HCT116 (cell line): ENCODE measurements at regions of chr13 and their contacts with region 1.

Region 1: DNA sequence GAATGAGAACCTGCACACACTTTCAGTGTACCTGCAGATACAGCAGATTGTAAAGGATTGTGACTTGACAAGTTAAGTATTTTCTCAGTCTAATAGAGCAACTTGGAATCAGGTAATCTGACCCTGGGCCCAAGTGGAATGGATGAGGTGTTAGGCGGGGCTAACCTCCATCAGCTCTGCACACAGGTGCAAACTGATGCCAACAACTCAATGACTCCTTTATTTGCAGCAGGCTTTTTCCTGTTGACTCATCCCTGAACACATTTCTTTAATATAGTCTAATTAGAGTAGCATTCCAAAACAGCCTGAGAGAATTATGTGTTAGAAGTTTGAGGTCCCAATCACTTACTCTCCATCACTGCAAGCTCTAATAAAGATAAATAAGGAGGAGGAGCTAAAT is 48.8 kb downstream of the TPT1 start:
- DNase-seq: peak; percentile 70
- ATAC-seq: peak; percentile 90
- H3K4me3 ChIP-seq: no peak overlapping the region
- H3K27ac ChIP-seq: peak overlapping the region; percentile 63
- H3K4me1 ChIP-seq: peaks cover 20 to 28% of the 10 kb centered on the region in 2 experiments
- H3K27me3 ChIP-seq: no peaks in the 10 kb centered on the region
- CTCF ChIP-seq: no peak
- POLR2A ChIP-seq: no peak
- RAD21 ChIP-seq: no peak

Region 2: DNA sequence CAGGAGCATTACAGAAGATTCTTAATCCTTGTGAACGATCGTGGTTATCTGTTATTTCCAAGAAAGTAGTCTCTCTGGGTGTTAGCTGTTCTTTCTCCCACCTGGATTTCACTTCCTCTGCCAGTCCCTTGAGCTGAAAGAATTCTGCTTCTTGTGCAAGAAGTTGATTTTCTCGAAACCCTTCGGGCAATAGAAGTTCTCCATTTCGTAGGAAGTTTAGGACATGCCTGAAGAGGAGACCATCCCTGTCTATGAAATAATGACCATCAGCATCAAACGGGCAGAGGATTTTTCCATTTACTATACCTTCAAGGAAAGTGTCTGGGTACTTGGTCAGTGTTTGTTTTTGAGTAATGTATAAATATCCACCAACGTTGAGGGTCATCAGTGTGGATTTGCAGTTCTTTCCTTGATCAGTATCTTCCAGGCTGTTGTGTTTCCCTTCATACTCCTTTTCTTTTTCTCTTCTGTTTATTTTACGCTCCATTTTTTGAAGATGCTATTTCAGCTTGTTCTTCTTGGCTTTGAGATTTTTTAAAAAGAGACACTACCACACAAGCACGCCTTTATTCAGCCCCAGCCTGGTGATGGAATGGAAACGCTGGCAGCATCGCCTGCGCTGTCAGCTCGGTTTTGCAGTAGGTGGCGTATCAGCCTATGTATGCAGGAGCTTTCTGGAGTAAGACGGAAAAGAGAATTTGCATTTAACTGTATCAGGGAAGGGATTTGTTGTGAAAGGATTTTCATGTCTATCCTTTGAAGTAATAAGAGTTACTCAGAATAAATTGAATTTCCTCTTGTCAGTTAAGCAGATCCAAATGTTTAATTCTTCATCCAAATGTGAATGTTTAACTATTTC is 97.9 kb before region 1 on chr13:
- CTCF ChIA-PET with region 1: no interaction called
- POLR2A ChIA-PET with region 1: interaction called, 10 read pairs
- RAD21 ChIA-PET with region 1: no interaction called
- intact Hi-C with region 1: no loop called
- DNase-seq: no peak
- ATAC-seq: no peak
- H3K4me3 ChIP-seq: no peak overlapping the region
- H3K27ac ChIP-seq: no peak overlapping the region
- H3K4me1 ChIP-seq: peaks cover 0 to 17% of the 10 kb centered on the region in 2 experiments; a peak in 1 of 4 replicates
- H3K27me3 ChIP-seq: no peaks in the 10 kb centered on the region
- CTCF ChIP-seq: no peak; a peak in 3 of 6 replicates
- POLR2A ChIP-seq: no peak
- RAD21 ChIP-seq: peak; percentile 41